ENCODE measurements at regions of chr10 and their contacts with region 1.

Region 1: DNA sequence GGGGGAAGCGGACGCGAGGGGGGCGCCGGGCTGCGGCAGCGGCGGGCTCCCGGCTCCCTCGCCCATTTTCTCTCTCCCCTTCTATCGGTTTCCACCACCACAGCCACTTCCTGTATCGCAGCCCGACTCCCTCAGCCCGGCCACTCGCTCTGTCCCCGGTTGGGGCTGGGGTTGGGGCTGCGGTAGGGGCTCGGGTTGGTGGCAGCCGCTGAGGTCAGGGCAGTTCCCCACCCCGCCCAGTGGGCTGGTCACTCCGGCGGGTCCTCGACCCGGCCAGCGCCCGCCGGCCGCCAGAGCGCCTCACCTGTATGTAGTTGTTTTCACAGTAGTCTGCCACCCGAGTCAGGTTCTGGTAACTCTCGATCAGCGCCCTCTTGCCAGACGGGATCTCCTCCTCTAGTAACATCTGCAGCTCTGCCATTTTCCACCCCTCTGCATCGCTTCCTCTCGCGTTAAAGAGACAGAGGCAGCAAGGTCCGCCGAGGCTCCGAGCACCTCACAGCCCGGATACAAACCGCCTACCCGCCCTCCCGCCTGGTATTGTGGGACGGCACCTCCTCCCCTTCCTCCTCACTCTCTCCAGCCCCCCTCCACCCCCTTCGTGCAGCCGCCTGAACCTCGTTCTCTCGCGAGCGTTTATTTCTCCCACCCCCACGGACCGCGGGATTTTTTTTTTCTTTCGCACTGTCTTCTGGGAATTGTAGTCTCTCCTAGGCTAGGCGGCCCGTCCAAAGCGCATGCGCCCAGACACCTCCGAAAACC is at the start of gene ABI1:
- DNase-seq: peak; percentile 98
- H3K4me3 Mint-ChIP-seq: peak within 1 kb of the TSS; percentile 90
- H3K27ac Mint-ChIP-seq: peak within 1 kb of the TSS; percentile 96
- H3K4me1 Mint-ChIP-seq: peaks cover 26% of the 10 kb centered on the region
- H3K27me3 Mint-ChIP-seq: no peaks in the 10 kb centered on the region
- total RNA-seq, gene ABI1: 55.5 to 56.2 TPM

Region 2: DNA sequence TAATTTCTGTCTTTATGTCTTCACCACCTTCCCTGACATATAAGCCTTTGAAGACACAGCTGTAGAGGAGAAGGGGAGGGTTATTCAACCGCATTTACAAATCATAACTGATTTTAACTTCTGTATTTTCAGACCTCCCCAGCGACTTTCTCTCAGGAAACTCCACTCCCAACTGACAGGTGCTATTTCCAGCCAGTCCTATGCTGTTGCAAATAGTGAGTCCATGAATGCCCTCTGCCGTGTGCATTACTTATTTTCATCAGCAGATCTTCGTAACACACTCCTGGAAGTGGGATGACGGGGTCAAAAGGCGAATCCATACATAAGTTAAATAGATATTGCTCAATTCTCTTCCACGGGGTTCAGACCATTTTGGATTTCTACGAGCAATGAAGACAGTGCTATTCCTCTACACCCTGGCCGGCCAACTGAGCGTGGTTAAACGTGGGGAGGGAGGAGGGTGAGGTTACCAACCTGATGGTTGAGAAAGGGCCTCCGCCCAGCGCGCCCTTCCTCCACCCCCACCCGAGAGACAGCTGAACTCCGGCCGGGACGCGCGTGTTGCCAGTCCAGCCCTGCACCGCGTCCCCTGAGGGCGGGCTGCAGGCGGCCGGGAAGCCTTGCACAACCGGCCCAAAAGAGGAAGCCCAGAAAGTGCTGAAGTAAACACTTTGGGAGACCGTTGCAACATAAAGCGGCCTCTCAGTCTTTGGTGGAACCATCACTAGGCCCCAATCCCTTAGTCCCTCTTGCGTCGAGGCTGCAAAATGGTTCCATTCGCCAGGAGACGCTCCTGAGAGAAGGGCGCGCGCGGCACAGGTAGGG is 422.8 kb before region 1 on chr10 and contains the start of gene APBB1IP:
- CTCF ChIA-PET with region 1: interaction called, 4 read pairs
- POLR2A ChIA-PET with region 1: no interaction called
- intact Hi-C with region 1: loop called (anchors 5 kb)
- DNase-seq: peak; percentile 66
- H3K4me3 Mint-ChIP-seq: peak within 1 kb of the TSS; percentile 93
- H3K27ac Mint-ChIP-seq: peak within 1 kb of the TSS; percentile 92
- H3K4me1 Mint-ChIP-seq: peaks cover 51% of the 10 kb centered on the region
- H3K27me3 Mint-ChIP-seq: no peaks in the 10 kb centered on the region
- total RNA-seq, gene APBB1IP: 50.1 to 52.1 TPM

Region 3: DNA sequence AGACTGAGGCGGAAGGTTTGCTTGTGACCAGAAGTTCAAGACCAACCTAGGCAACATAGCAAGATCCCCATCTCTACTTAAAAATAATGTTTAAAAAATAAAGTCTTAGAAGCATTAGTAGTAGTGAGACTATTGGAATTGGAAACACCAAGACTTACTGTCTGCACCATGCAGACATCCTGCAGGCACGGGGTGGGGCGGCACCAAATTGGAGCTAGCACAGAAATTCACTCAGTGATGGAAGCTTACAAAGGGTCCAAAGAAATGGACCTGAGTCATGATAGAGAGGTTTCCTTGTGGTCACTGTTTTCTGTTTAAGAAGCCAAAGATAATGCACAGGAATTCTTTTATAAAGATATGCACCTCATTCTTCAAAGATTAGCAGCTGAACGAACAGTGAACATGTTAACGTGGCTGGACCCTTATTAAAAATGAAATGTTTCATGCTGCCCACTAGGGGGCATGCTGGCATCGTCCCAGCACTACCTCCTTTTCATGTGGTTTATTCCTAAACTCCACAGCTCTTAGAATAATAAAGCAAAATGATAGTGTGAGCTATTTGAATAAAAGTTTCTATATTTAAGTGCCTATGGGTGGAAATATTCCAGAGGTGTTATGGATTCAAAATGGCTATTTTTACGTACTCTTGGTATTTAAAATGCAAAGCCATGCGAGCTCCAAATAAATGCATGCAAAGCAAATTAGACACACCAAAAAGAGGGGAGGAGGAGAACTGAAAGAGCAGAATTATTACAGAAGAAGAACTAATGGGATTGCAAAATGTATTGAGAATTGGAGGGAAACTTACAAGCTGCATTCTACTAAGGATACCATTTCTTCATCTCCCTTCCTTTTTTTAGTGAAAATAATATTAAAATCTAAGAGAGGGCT is 134.5 kb before region 1 on chr10:
- CTCF ChIA-PET with region 1: interaction called, 25 read pairs
- POLR2A ChIA-PET with region 1: no interaction called
- intact Hi-C with region 1: loop called (anchors 1 kb)
- DNase-seq: peak; percentile 58
- H3K4me3 Mint-ChIP-seq: no peak overlapping the region
- H3K27ac Mint-ChIP-seq: no peak overlapping the region
- H3K4me1 Mint-ChIP-seq: peaks cover 4% of the 10 kb centered on the region
- H3K27me3 Mint-ChIP-seq: no peaks in the 10 kb centered on the region

Region 4: GRCh38 chr10:26839966-26840627 is 20.5 kb before region 1 on chr10:
- CTCF ChIA-PET with region 1: interaction called, 6 read pairs
- POLR2A ChIA-PET with region 1: interaction called, 3 read pairs
- intact Hi-C with region 1: loop called (anchors 1 kb)
- DNase-seq: no peak
- H3K4me3 Mint-ChIP-seq: no peak overlapping the region
- H3K27ac Mint-ChIP-seq: peak overlapping the region; percentile 30
- H3K4me1 Mint-ChIP-seq: peaks cover 69% of the 10 kb centered on the region
- H3K27me3 Mint-ChIP-seq: no peaks in the 10 kb centered on the region

Region 5: DNA sequence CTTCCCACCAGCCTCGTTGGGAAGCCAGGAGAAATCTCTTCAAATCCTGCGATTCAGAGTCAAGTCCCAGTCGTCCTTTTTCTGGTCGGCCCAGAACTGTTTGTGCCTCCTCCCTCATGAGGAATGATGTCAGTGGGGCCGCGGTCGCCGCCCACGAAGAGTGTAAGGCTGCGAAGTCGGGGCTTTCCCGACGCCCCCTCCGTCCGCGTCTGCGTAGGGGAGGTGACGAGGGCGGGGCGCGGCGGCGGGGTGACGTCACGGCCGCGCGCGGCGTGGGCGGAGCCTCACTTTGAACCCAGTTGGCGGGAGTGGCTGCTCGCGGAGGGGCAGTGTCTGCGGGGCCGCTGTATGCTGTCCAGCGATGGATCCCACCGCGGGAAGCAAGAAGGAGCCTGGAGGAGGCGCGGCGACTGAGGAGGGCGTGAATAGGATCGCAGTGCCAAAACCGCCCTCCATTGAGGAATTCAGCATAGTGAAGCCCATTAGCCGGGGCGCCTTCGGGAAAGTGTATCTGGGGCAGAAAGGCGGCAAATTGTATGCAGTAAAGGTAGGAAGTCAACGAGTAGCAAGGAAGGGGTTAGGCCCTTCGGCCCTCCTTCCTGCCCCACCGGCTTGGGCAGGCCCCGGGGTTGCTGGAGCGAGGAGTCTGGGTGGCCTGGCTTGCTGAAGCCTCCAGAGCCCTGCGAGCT is 294.6 kb after region 1 on chr10 and contains the start of gene MASTL:
- CTCF ChIA-PET with region 1: no interaction called
- POLR2A ChIA-PET with region 1: no interaction called
- intact Hi-C with region 1: loop called (anchors 1 kb)
- DNase-seq: peak; percentile 96
- H3K4me3 Mint-ChIP-seq: peak within 1 kb of the TSS; percentile 97
- H3K27ac Mint-ChIP-seq: peak within 1 kb of the TSS; percentile 100
- H3K4me1 Mint-ChIP-seq: peaks cover 39% of the 10 kb centered on the region
- H3K27me3 Mint-ChIP-seq: no peaks in the 10 kb centered on the region
- total RNA-seq, gene MASTL: 44.2 to 50.4 TPM

Region 6: GRCh38 chr10:27207350-27207749 is 346.7 kb after region 1 on chr10:
- CTCF ChIA-PET with region 1: no interaction called
- POLR2A ChIA-PET with region 1: no interaction called
- intact Hi-C with region 1: no loop called
- DNase-seq: no peak
- H3K4me3 Mint-ChIP-seq: no peak overlapping the region
- H3K27ac Mint-ChIP-seq: no peak overlapping the region
- H3K4me1 Mint-ChIP-seq: no peaks in the 10 kb centered on the region
- H3K27me3 Mint-ChIP-seq: no peaks in the 10 kb centered on the region

Region 7: GRCh38 chr10:28202941-28203352 is 1342.3 kb after region 1 on chr10:
- CTCF ChIA-PET with region 1: no interaction called
- POLR2A ChIA-PET with region 1: no interaction called
- intact Hi-C with region 1: no loop called
- DNase-seq: no peak
- H3K4me3 Mint-ChIP-seq: no peak overlapping the region
- H3K27ac Mint-ChIP-seq: no peak overlapping the region
- H3K4me1 Mint-ChIP-seq: no peaks in the 10 kb centered on the region
- H3K27me3 Mint-ChIP-seq: no peaks in the 10 kb centered on the region